Dorsolateral prefrontal cortex (tissue), 120 donors: ENCODE measurements at regions of chr16 and their contacts with region 1.

Region 1: GRCh38 chr16:2486645-2487516 is 12.0 kb downstream of the TBC1D24 start:
- DNase-seq: peak in 7 of 10 donors; percentile 57 to 76 (median 70)
- H3K4me3 ChIP-seq: peak overlapping the region in 24 of 59 donors; percentile 4 to 36 (median 18)
- H3K27ac ChIP-seq: peak overlapping the region in 56 of 59 donors; percentile 25 to 90 (median 74)
- H3K27me3 ChIP-seq: no peaks in the 10 kb centered on the region
- CTCF ChIP-seq: peak in 50 of 56 donors; percentile 17 to 69 (median 44)

Region 2: DNA sequence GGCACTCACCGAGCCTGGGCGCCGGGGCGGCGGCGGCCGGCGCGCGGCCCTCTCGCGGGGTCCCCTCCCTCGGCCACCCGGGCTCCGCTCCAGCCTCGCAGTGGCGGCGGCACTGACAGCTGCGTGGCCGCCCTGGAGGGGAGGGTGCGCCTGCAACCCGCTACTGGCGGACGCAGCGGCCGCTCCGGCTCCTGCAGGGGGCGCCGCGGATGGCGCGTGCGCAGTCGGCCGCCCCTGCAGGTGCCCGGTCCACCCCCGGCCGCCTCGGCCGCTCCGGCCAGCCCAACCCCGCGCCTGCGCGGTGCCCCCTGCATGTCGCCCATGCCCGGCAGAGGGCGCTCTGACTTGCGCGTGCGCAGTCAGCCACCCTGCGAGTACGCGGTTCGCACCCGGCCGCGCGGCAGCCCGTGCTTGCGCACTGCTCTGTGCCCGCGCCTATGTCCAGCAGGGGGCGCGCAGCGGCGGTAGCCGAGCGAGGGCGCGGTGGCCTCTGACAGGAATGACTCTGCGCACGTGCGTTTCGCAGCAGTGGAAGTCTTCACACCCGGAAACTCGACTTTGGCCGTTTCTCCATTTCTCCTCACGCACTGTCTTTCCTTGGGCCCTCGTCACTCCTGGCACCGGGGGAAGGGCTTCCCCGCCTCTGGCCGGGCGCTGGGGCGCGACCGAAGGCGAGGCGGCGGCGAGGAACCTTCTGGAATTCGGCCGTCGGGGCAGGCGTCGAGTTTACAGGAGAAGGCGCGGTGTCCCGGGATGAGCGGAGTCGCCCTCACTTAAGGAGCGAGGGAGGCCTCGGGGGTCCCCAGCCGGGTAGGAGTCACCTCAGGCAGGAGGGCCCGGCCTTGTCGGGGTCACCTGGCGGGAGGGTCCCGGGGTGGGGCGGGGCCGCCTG is 146.1 kb before region 1 on chr16 and contains the start of gene ABCA3:
- intact Hi-C with region 1: loop called in 1 of 2 experiments (anchors 5 kb)
- DNase-seq: peak; percentile 82 to 97 (median 90)
- H3K4me3 ChIP-seq: peak within 1 kb of the TSS; percentile 68 to 97 (median 87)
- H3K27ac ChIP-seq: peak within 1 kb of the TSS; percentile 44 to 97 (median 92)
- H3K27me3 ChIP-seq: no peaks in the 10 kb centered on the region
- CTCF ChIP-seq: peak; percentile 94 to 100 (median 100)
- total RNA-seq, gene ABCA3: 75.2 to 141 (median 103) TPM